Activated naive CD4-positive, alpha-beta T cell treated with anti-CD3 and anti-CD28 coated beads for 36 hours (primary cell): ENCODE measurements at regions of chr1 and their contacts with region 1.

Region 1: GRCh38 chr1:93179886-93180722 is at the start of gene TMED5:
- DNase-seq: peak; percentile 98
- H3K4me3 Mint-ChIP-seq: peak within 1 kb of the TSS; percentile 88
- H3K27ac Mint-ChIP-seq: peak within 1 kb of the TSS; percentile 99
- H3K4me1 Mint-ChIP-seq: peaks cover 49% of the 10 kb centered on the region
- H3K27me3 Mint-ChIP-seq: no peaks in the 10 kb centered on the region
- total RNA-seq, gene TMED5: 27.8 to 28.2 TPM

Region 2: GRCh38 chr1:93021539-93022134 is 158.5 kb before region 1 on chr1:
- CTCF ChIA-PET with region 1: no interaction called
- intact Hi-C with region 1: loop called (anchors 5 kb)
- DNase-seq: no peak
- H3K4me3 Mint-ChIP-seq: no peak overlapping the region
- H3K27ac Mint-ChIP-seq: no peak overlapping the region
- H3K4me1 Mint-ChIP-seq: no peaks in the 10 kb centered on the region
- H3K27me3 Mint-ChIP-seq: peaks cover 1% of the 10 kb centered on the region

Region 3: DNA sequence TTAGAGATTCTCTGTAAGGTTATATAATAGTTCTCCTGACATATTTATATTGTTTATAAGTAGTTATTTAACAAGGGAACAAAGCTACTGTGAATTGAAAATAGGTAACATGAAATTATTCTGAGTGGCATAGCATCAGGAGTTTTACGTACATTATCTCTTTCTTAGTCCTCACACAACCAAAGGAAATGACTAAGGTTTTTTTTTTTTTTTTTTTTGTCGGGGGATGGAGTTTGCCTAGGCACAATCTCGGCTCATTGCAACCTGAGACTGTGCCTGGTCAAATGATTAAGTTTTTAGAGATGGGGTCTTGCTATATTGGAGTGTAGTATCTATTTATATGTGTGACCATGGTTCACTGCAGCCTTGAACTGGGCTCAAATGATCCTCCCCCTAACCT is 24.8 kb before region 1 on chr1:
- CTCF ChIA-PET with region 1: interaction called, 3 read pairs
- intact Hi-C with region 1: loop called (anchors 1 kb)
- DNase-seq: no peak
- H3K4me3 Mint-ChIP-seq: no peak overlapping the region
- H3K27ac Mint-ChIP-seq: peak overlapping the region; percentile 73
- H3K4me1 Mint-ChIP-seq: peaks cover 23% of the 10 kb centered on the region
- H3K27me3 Mint-ChIP-seq: no peaks in the 10 kb centered on the region

Region 4: DNA sequence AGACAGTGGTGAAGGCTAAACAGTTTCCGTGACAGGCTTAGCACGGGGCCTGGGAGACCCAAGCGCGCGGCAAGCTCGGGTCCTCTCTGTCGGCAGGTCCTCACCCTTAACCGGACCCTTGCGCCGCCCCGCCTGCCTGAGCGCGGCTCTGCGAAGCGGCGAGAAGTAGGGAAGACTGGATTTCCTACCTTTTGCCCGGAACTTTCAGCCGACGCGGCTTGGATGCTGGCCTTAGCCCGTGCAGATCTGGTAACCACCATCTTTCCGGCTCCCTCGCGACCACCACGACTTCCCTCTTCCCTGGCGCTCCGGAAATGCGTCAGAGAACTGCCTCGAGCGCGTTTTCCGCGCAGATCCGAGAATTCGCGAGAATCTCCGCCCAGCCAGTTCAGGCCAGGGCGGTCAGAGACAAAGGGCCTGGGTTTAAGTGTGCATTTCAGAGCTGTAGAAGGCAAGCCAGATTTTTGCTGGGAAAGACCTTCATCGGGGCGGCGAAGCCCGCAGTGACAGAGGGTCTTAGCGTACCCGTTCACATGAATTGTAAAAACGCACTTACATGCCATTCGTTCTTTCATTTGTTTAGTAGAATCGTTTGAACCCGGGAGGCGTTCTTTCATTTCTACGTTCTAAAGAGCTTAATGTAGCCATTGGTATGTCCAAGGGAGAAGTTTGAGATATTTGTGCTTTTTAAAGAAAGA is 698.9 kb after region 1 on chr1 and contains the start of gene DNTTIP2:
- CTCF ChIA-PET with region 1: no interaction called
- intact Hi-C with region 1: loop called (anchors 1 kb)
- DNase-seq: peak; percentile 95
- H3K4me3 Mint-ChIP-seq: peak within 1 kb of the TSS; percentile 92
- H3K27ac Mint-ChIP-seq: peak within 1 kb of the TSS; percentile 97
- H3K4me1 Mint-ChIP-seq: peaks cover 42% of the 10 kb centered on the region
- H3K27me3 Mint-ChIP-seq: no peaks in the 10 kb centered on the region
- total RNA-seq, gene DNTTIP2: 58.5 to 64.5 TPM